ENCODE measurements at regions of chr18 and their contacts with region 1.

Region 1: DNA sequence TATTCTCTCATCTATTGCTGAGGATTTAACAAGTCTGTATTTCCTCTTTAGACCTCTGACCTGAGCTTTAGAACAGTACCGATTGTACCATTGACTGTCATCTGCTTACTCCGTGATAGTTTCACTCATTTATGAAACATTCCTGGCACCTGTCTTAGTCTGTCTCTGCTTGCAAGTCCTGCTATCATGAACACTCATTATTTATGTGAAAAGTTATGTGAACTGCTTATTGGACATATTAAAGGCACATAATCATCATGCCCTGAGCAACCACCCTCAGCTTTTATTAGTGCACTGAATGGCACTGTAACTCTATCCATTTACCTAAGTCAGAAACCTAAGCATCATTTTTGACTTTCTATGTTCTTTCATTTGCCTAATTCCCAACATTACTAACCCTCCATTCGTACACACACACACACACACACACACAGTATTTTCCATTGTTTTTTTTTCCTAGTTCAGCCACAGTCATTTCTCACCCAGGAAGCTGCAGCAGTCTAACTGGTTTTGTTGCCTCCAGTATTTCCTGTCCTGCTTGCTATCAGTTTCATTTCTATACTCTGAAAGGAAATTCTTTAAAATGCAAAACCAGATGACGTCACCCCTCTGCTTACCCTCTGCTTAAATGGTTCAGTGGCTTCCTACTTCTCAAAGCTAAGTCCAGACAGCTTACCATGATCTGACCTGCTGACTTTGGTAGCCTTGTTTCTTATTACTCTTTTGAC is 146.1 kb downstream of the HAUS1 start:
- DNase-seq: peak; percentile 71
- H3K4me3 Mint-ChIP-seq: peak overlapping the region; percentile 28
- H3K27ac Mint-ChIP-seq: peak overlapping the region; percentile 92
- H3K4me1 Mint-ChIP-seq: peaks cover 75% of the 10 kb centered on the region
- H3K27me3 Mint-ChIP-seq: no peaks in the 10 kb centered on the region

Region 2: GRCh38 chr18:45715341-45715740 is 534.9 kb before region 1 on chr18:
- intact Hi-C with region 1: no loop called
- DNase-seq: no peak
- H3K4me3 Mint-ChIP-seq: no peak overlapping the region
- H3K27ac Mint-ChIP-seq: no peak overlapping the region
- H3K4me1 Mint-ChIP-seq: no peaks in the 10 kb centered on the region
- H3K27me3 Mint-ChIP-seq: peaks cover 18% of the 10 kb centered on the region

Region 3: DNA sequence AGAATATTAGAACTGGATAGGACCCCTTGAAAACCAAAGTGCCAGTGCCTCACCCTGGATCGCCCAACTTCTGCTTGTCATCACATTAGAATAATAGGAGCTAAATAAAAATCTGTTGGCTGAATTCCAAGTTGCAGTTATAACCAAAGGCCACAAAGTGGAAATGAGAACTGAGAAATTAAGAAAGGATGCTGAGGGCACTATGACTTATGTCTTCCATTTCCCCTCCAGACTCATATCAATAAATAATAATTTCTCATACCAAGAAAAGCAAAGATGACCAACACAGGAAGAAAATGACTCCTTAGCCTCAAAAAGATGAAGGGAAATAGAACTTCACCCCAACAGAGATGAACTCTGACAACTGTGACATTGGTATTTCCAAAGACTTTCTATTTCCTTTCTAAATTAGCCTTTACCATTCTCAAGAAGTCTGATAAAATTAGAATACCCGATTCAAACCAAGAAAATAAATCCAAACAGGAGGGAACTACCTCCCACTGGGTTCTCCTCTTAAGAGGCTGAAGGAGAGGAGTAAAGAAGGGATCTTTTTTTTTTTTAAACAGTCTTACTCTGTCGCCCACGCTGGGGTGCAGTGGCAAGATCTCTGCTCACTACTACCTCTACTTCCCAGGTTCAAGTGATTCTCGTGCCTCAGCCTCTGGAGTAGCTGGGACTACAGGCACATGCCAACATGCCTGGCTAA is 236.6 kb before region 1 on chr18:
- intact Hi-C with region 1: loop called (anchors 1 kb)
- DNase-seq: no peak
- H3K4me3 Mint-ChIP-seq: no peak overlapping the region
- H3K27ac Mint-ChIP-seq: peak overlapping the region; percentile 3
- H3K4me1 Mint-ChIP-seq: peaks cover 11% of the 10 kb centered on the region
- H3K27me3 Mint-ChIP-seq: peaks cover 9% of the 10 kb centered on the region

Region 4: DNA sequence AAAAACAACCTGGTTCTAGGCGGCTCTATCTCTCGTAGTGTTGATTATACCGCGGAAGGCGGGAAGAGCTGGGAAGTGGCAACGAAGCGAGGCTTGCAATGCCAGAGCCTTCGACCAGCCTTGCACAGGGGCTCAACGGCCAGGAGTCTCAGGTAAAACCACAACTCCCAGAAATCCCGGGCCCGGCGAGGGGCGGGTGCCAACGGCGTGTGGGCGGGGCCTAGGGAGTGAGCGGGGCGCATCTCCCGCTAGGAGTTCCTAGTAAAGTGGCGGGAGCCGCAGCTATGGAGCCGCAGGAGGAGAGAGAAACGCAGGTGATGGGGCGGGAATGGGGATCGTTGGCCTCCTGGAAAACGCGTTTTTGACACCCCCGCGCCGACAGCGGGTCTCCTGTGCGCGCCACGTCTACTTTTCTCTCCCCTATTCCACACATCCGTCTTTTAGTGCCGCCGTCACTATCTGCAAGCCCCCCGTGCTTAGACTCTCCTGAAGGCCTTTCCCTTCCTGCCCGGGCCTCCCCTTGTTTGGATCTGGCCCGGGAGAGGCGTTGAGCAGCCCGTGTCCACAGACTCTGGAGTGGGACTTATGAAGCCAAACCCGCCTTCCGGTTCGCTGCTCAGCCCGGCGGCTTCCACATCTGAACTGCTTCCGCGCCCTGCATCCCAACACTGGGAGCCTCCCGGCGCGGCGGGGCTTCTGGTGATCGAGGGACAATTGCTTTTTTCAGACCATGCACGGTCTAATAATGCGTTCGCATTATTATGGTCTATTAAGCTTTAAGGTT is 145.9 kb before region 1 on chr18 and contains the start of gene HAUS1:
- intact Hi-C with region 1: loop called (anchors 1 kb)
- DNase-seq: peak; percentile 79
- H3K4me3 Mint-ChIP-seq: peak within 1 kb of the TSS; percentile 96
- H3K27ac Mint-ChIP-seq: peak within 1 kb of the TSS; percentile 90
- H3K4me1 Mint-ChIP-seq: peaks cover 21% of the 10 kb centered on the region
- H3K27me3 Mint-ChIP-seq: peaks cover 2% of the 10 kb centered on the region
- total RNA-seq, gene HAUS1: 41.8 and 42.1 TPM in 2 replicates

Region 5: GRCh38 chr18:46213295-46213694 is 37.0 kb before region 1 on chr18:
- intact Hi-C with region 1: loop called (anchors 1 kb)
- DNase-seq: no peak
- H3K4me3 Mint-ChIP-seq: no peak overlapping the region
- H3K27ac Mint-ChIP-seq: peak overlapping the region; percentile 37
- H3K4me1 Mint-ChIP-seq: peaks cover 59% of the 10 kb centered on the region
- H3K27me3 Mint-ChIP-seq: no peaks in the 10 kb centered on the region

Region 6: GRCh38 chr18:46264235-46264893 is 14.1 kb after region 1 on chr18:
- intact Hi-C with region 1: loop called (anchors 1 kb)
- DNase-seq: no peak
- H3K4me3 Mint-ChIP-seq: no peak overlapping the region
- H3K27ac Mint-ChIP-seq: peak overlapping the region; percentile 66
- H3K4me1 Mint-ChIP-seq: peaks cover 80% of the 10 kb centered on the region
- H3K27me3 Mint-ChIP-seq: no peaks in the 10 kb centered on the region

Region 7: GRCh38 chr18:46917108-46917802 is 667.0 kb after region 1 on chr18 and contains the starts of genes KATNAL2 and PIAS2:
- intact Hi-C with region 1: loop called (anchors 2 kb)
- DNase-seq: peak; percentile 68
- H3K4me3 Mint-ChIP-seq: peak within 1 kb of the TSS; percentile 94
- H3K27ac Mint-ChIP-seq: peak within 1 kb of the TSS; percentile 90
- H3K4me1 Mint-ChIP-seq: peaks cover 49% of the 10 kb centered on the region
- H3K27me3 Mint-ChIP-seq: peaks cover 5% of the 10 kb centered on the region
- total RNA-seq, gene KATNAL2: 0.26 and 0.27 TPM in 2 replicates
- total RNA-seq, gene PIAS2: 28.5 and 28.7 TPM in 2 replicates

Region 8: GRCh38 chr18:47457614-47458013 is 1207.4 kb after region 1 on chr18:
- intact Hi-C with region 1: no loop called
- DNase-seq: no peak
- H3K4me3 Mint-ChIP-seq: no peak overlapping the region
- H3K27ac Mint-ChIP-seq: no peak overlapping the region
- H3K4me1 Mint-ChIP-seq: no peaks in the 10 kb centered on the region
- H3K27me3 Mint-ChIP-seq: no peaks in the 10 kb centered on the region

Measured in activated T-helper 1 cell treated with anti-CD3 and anti-CD28 coated beads, Interleukin-12 subunit alpha, Interleukin-12 subunit beta, Interleukin-2, Interleukin-4 antibody, amounts not matched to agents 30 ng/mL and 10 ng/mL and 1 ng/mL, durations not matched to agents 14 hours and 24 hours and 36 hours (primary cell).